Activated B cell treated with CpG ODN at 0.5 μM for 24 hours (primary cell): ENCODE measurements at regions of chr12 and their contacts with region 1.

Region 1: DNA sequence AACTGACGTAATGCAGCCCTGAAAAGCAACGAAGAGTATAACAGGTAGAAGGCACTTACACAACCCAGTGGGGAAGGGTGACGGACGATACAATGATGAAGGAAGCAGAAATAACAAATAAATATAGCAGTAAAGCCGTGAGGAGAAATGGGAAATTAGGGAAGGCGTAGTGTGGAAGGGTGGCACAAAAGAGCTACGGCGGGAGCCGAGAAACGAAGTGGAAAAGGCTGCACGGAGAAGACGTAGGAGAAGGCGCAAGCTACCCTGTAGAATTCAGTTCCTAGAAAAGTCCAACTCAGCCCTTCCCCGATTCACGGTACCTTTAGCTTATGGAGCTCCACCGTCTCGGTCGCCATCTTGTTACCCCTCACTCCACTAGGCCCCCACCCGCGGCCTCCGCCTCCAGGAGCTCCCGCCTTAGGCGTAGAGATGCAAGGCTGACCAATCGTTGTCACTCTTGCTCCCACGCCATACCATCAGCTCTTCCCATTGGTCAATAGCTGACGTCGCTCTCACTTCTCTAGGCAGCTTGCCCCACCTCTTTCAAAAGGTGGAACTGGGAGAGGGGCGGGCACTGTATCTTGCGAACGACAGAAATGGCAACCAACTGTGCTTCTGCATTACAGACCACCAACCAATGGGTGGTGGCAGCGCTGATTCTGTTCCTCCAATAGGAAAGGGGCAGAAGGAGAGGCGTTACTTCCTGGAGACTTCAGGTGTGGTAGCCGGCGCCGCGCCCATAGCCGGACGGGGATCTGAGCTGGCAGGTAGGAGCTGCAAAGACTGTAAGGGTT is at the starts of genes ORMDL2 and SARNP:
- DNase-seq: peak; percentile 80
- ATAC-seq: peak; percentile 94
- H3K4me3 Mint-ChIP-seq: no peak within 1 kb of the TSS
- H3K27ac Mint-ChIP-seq: no peak within 1 kb of the TSS
- H3K4me1 Mint-ChIP-seq: peaks cover 21% of the 10 kb centered on the region
- H3K27me3 Mint-ChIP-seq: no peaks in the 10 kb centered on the region
- CTCF ChIP-seq: no peak
- total RNA-seq, gene ORMDL2: 68.0 and 70.9 TPM in 2 replicates
- total RNA-seq, gene SARNP: 53.6 and 58.7 TPM in 2 replicates

Region 2: DNA sequence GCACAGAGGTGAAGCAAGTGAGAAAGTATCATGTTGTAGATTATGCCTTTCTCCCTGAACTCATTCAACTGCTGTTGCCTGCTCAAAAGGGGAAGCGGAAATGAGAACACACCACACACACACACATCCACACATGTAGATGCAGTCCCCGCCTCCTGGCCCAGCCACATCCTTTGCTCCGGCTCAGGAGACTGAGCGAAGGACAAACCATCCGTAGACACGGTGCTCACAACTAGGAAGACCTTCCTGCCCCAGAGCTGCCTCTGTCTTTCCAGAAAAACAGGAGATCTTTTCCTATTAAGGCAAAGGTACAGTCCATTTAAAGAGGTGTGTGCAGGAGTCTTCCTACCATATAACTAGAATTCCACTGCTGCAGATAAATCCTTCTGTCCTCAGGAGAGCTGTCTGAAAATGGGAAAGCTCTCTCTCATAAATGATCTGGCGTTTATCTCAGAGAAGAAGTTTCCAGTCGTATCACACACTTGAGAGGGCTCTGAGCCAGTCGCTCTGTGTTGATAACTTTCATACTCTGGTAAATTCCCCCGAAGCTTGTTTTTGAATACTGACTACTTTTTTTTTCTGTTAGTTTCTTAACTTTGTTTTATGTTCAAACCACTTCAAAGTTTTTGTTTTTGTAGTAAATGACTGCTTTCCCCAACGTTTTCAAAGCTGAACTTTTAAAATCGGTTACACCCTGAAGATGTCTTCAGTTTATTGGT is 832.7 kb before region 1 on chr12 and contains the start of gene TESPA1:
- CTCF ChIA-PET with region 1: no interaction called
- POLR2A ChIA-PET with region 1: no interaction called
- intact Hi-C with region 1: loop called (anchors 10 kb)
- DNase-seq: peak; percentile 62
- ATAC-seq: peak; percentile 97
- H3K4me3 Mint-ChIP-seq: peak within 1 kb of the TSS; percentile 89
- H3K27ac Mint-ChIP-seq: peak within 1 kb of the TSS; percentile 97
- H3K4me1 Mint-ChIP-seq: peaks cover 80% of the 10 kb centered on the region
- H3K27me3 Mint-ChIP-seq: no peaks in the 10 kb centered on the region
- CTCF ChIP-seq: no peak
- total RNA-seq, gene TESPA1: 31.5 and 35.5 TPM in 2 replicates

Region 3: DNA sequence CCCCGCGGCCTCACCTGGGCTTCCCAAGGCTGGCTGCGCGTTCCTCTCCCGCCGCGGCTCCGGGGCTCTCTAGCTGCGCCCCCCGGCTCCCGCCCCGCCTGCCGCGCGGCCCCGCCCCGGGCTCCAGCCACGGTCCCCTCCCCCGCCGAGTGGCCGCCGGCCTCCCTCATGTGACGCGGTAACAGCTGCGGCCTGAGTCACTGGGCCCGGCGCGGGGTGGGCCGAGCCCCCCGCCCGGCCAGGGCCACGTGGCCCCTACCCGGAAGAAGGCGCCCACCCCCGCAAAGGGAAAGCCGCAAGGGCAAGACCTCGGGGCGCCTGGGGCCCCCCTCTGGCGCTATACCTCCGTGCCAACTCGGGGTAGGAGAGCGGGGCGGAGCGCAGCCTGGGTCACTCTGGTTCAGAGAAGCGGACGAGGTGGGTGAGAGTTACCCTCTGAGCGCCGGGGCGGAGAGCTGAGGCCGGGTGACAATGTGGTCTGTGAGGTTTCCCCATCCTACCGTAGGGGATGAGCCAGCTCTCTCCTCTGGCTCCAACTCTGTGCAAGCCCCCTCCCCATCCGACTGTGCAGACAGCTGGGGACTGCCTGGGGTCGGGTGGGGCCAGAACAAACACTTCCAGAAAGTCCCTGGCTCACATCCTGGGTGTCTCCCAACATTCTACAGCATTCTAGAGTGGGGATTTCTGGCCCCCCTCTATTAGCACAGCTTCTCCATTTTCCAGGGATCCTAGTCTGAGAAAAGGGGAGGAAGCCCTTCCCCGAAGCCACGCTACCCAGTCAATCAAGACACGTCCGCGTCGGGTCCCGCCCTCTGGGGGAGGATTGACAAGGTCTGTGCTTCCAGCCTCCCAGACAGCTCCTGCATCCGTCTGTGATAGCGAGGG is 88.4 kb before region 1 on chr12 and contains the start of gene CD63:
- CTCF ChIA-PET with region 1: no interaction called
- POLR2A ChIA-PET with region 1: interaction called, 13 read pairs
- intact Hi-C with region 1: no loop called
- DNase-seq: peak; percentile 68
- ATAC-seq: peak; percentile 64
- H3K4me3 Mint-ChIP-seq: peak within 1 kb of the TSS; percentile 89
- H3K27ac Mint-ChIP-seq: peak within 1 kb of the TSS; percentile 88
- H3K4me1 Mint-ChIP-seq: peaks cover 37% of the 10 kb centered on the region
- H3K27me3 Mint-ChIP-seq: no peaks in the 10 kb centered on the region
- CTCF ChIP-seq: no peak
- total RNA-seq, gene CD63: 104 and 111 TPM in 2 replicates

Region 4: GRCh38 chr12:55940065-55940732 is 122.7 kb after region 1 on chr12:
- CTCF ChIA-PET with region 1: interaction called, 19 read pairs
- POLR2A ChIA-PET with region 1: interaction called, 5 read pairs
- intact Hi-C with region 1: loop called (anchors 1 kb)
- DNase-seq: peak; percentile 63
- ATAC-seq: peak; percentile 99
- H3K4me3 Mint-ChIP-seq: no peak overlapping the region
- H3K27ac Mint-ChIP-seq: peak overlapping the region; percentile 47
- H3K4me1 Mint-ChIP-seq: peaks cover 12% of the 10 kb centered on the region
- H3K27me3 Mint-ChIP-seq: no peaks in the 10 kb centered on the region
- CTCF ChIP-seq: peak; percentile 63

Region 5: GRCh38 chr12:55973598-55974307 is 156.2 kb after region 1 on chr12 and contains the start of gene RAB5B:
- CTCF ChIA-PET with region 1: no interaction called
- POLR2A ChIA-PET with region 1: interaction called, 20 read pairs
- intact Hi-C with region 1: loop called (anchors 1 kb)
- DNase-seq: peak; percentile 83
- ATAC-seq: peak; percentile 87
- H3K4me3 Mint-ChIP-seq: no peak within 1 kb of the TSS
- H3K27ac Mint-ChIP-seq: no peak within 1 kb of the TSS
- H3K4me1 Mint-ChIP-seq: peaks cover 27% of the 10 kb centered on the region
- H3K27me3 Mint-ChIP-seq: no peaks in the 10 kb centered on the region
- CTCF ChIP-seq: no peak
- total RNA-seq, gene RAB5B: 82.1 and 83.8 TPM in 2 replicates